RWPE1 (cell line): ENCODE measurements at regions of chr16 and their contacts with region 1.

Region 1: DNA sequence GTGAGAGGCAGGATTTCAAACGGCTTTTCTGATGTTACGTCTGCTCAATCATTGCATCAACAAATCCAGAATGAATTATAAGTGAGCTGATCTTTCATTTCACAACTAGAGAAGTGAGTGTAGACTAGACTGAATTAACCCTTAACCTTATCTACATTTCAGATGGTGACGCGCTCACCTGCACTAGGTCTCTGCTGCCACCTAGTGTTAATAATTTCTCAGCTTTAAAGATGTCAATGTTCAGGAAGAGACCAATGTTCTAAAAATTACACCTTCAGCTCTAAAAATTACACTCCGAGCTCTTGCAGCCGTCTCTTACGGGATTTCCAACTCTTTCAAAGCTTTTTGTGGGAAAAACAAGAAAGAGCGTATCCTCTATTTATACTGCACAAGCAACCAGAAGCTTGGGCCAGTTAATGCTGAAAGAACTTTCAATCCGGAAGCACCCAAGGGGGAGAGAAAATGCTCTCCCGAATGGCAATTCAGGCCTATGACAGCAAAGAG is 88.2 kb upstream of the FA2H start:
- DNase-seq: peak; percentile 65
- H3K27ac ChIP-seq: no peak overlapping the region
- CTCF ChIP-seq: peak; percentile 90

Region 2: DNA sequence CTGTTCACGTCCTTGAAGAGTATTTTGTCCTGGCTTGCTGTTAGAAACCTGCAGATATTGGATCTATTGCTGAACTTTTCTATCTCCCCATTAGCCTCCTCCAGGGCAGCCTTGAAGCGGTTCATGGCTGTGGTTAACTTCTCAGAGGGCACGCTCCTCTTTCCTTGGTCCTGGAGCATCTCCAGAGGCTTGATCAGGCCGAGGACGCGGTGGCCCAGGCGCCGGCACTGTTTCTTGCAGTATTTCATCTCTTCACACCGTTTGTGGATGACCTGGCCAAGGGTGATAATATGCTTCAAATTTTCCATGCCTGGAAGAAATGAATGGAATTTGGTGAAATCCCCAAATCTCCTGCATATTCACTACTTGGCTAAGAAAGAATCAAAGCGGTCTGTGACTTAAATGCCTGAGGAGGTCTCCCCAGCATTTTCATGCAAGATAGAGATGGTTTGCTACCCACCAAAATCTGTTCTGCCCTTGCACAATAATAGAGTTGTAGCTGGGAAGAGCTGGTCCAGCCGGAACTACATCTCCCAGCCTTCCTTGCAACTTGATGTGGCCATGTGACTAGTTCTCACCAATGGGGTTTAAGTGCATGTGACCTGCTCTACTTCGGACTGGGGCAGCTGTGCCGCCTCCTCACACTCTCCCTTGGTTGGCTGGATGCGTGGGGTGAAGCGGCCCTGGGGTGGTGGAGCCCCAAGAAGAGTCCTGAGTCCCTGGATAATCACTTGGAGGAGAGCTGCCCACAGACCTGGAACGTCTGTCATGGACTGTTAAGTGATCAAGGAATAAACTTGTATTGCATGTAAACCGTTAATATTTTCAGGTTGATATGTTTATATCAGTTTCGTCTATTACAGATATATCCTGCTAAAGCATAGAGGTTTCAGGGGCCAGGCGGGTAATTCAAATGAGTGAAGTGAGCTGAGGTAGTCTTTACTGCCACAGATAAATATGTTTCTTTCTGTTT is 167.1 kb before region 1 on chr16:
- CTCF ChIA-PET with region 1: interaction called, 13 read pairs
- POLR2A ChIA-PET with region 1: interaction called, 10 read pairs
- DNase-seq: peak; percentile 91
- H3K27ac ChIP-seq: peak overlapping the region; percentile 53
- CTCF ChIP-seq: no peak

Region 3: GRCh38 chr16:74724820-74725549 is 137.8 kb before region 1 on chr16:
- CTCF ChIA-PET with region 1: interaction called, 18 read pairs
- POLR2A ChIA-PET with region 1: interaction called, 7 read pairs
- DNase-seq: peak; percentile 76
- H3K27ac ChIP-seq: no peak overlapping the region
- CTCF ChIP-seq: no peak

Region 4: DNA sequence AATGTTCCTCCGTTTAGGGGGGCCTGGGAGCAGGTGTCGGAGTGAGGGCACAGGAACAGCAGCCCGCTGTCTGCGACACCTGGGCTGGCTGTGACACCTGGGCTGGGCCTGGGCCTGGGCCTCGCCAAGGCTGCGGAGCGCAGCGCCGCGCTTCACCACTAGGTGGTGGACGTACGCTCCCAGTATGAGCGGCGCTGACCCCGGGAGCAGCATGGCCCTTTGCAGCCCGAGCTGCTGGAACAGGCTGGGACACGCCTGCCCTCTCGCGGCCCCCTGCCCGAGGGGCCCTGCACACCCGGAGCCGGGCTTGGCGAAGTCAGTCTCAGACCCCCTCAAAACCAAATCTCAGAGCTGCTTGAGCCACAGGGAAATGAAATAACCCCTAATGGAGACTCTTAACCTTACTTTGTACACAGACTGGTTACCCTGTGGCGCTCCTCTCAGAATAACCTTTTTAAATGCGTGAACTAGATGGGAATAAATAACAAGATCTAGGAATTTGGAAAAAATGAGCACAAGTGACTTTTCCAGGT is 49.6 kb before region 1 on chr16:
- CTCF ChIA-PET with region 1: interaction called, 69 read pairs
- POLR2A ChIA-PET with region 1: no interaction called
- DNase-seq: peak; percentile 76
- H3K27ac ChIP-seq: no peak overlapping the region
- CTCF ChIP-seq: peak; percentile 97

Region 5: GRCh38 chr16:74843719-74844433 is 18.9 kb before region 1 on chr16:
- CTCF ChIA-PET with region 1: interaction called, 11 read pairs
- POLR2A ChIA-PET with region 1: no interaction called
- DNase-seq: peak; percentile 30
- H3K27ac ChIP-seq: no peak overlapping the region
- CTCF ChIP-seq: no peak